ENCODE measurements at regions of chr3 and their contacts with region 1.

Region 1: GRCh38 chr3:123869165-123869564 is 15.0 kb downstream of the MYLK start:
- DNase-seq: no peak
- H3K4me3 ChIP-seq: no peak overlapping the region
- H3K27ac ChIP-seq: peak overlapping the region; percentile 79 to 86
- H3K4me1 ChIP-seq: peaks cover 0 to 17% of the 10 kb centered on the region in 2 donors
- H3K27me3 ChIP-seq: no peaks in the 10 kb centered on the region
- CTCF ChIP-seq: no peak

Region 2: DNA sequence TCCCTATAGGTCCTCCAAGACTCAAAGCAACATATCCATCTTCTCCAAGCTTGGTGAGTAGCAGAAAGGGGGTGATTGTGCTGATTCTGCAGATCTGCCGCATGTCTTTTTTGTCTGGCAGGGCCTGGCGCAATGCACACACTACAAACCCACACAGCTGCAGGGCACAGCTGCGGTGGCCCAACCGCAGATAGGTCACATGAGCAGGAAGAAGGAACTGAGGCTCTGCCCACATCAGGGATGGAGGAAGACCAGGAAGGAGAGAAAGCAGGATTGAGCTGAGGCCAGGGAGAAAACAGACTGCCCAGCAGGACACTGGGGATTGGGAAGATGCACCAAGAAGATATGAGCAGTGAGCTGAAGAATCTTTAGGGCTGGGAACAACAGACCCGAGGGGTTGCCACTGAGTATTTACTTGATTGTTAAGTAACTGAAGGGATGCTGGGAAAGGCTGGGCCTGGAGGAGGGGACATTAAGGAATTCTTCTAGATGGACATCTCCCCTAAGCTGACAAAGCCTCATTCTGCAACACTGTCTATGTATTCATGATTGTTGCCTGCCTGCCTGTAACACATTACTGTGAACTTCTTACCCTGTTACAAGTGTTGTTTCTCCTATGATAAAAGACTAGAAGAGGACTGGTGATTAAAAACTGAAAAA is 111.8 kb before region 1 on chr3:
- intact Hi-C with region 1: loop called (anchors 5 kb)
- DNase-seq: peak in 1 of 2 donors; percentile 69
- H3K4me3 ChIP-seq: no peak overlapping the region
- H3K27ac ChIP-seq: peak overlapping the region; percentile 74 to 76
- H3K4me1 ChIP-seq: peaks cover 15 to 47% of the 10 kb centered on the region in 2 donors
- H3K27me3 ChIP-seq: no peaks in the 10 kb centered on the region
- CTCF ChIP-seq: no peak

Measured in ascending aorta (tissue), 2 donors.